ENCODE measurements at regions of chr15 and their contacts with region 1.

Region 1: GRCh38 chr15:98700519-98700918 is 52.2 kb downstream of the IGF1R start:
- DNase-seq: no peak
- ATAC-seq: no peak
- H3K4me3 ChIP-seq: no peak overlapping the region
- H3K27ac ChIP-seq: no peak overlapping the region
- H3K4me1 ChIP-seq: peaks cover 16% of the 10 kb centered on the region
- H3K27me3 ChIP-seq: no peaks in the 10 kb centered on the region
- CTCF ChIP-seq: no peak

Region 2: DNA sequence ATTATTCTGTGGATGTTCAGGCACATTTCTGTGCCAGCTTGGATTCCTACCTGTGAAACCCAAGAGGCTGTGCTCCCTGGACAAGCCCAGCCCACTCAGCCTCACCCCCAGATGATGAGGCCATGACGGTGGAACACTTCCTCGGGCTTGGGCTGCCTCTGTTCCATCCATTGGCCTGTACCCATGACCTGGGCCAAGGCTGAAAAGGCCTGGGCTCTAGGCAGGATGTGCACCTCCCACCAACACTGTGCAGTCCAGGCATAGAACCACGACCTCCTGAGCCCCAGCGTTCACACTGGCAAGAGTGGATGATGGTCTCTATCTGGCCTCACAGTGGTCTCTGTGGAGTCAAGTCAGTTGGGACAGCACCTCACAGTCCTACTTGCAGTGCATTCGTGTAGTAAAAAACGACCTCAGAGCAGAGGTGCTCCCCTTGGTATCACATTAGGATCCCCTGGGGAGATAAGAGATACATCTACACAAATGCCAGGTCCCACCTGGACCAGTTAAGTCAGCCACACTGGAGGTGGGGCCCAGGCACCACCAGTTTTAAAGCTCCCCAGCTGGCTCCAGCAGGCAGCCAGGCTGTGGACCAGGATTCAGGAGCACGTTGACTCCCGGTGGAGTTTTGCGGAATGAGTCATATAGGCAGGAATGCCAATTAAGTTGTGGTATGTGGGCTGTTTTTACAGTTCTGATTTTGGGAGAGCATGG is 91.2 kb before region 1 on chr15:
- CTCF ChIA-PET with region 1: no interaction called
- POLR2A ChIA-PET with region 1: no interaction called
- in situ Hi-C with region 1: no loop called
- intact Hi-C with region 1: no loop called
- DNase-seq: no peak
- ATAC-seq: peak; percentile 94
- H3K4me3 ChIP-seq: no peak overlapping the region
- H3K27ac ChIP-seq: peak overlapping the region; percentile 83
- H3K4me1 ChIP-seq: peaks cover 31% of the 10 kb centered on the region
- H3K27me3 ChIP-seq: no peaks in the 10 kb centered on the region
- CTCF ChIP-seq: no peak

Region 3: GRCh38 chr15:98689431-98689861 is 11.1 kb before region 1 on chr15:
- CTCF ChIA-PET with region 1: interaction called, 6 read pairs
- POLR2A ChIA-PET with region 1: interaction called, 15 read pairs
- in situ Hi-C with region 1: no loop called
- intact Hi-C with region 1: no loop called
- DNase-seq: no peak
- ATAC-seq: no peak
- H3K4me3 ChIP-seq: no peak overlapping the region
- H3K27ac ChIP-seq: no peak overlapping the region
- H3K4me1 ChIP-seq: peaks cover 39% of the 10 kb centered on the region
- H3K27me3 ChIP-seq: no peaks in the 10 kb centered on the region
- CTCF ChIP-seq: no peak

Region 4: DNA sequence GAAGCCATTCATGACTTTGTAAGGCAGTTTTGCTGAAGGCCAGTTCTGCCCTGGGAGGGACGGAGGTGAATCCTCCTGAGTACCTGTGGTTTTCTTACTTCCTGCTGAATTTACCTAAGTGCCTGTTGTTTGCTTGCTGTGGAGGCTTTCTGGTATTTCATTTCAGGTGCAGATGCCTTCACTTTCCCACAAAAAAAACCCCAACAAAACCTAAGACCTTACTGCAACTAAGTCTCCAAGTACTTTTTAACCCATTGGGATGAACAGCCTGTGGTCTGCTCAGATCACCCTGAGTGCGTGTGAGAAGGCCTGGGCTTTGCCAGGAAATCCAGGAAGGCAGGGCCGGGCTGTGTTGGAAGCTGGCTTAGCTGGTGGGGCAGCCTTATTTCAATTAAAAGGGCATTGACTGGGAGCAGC is 13.1 kb after region 1 on chr15:
- CTCF ChIA-PET with region 1: no interaction called
- POLR2A ChIA-PET with region 1: no interaction called
- in situ Hi-C with region 1: no loop called
- intact Hi-C with region 1: no loop called
- DNase-seq: no peak
- ATAC-seq: no peak
- H3K4me3 ChIP-seq: no peak overlapping the region
- H3K27ac ChIP-seq: no peak overlapping the region
- H3K4me1 ChIP-seq: peaks cover 39% of the 10 kb centered on the region
- H3K27me3 ChIP-seq: no peaks in the 10 kb centered on the region
- CTCF ChIP-seq: no peak

Region 5: DNA sequence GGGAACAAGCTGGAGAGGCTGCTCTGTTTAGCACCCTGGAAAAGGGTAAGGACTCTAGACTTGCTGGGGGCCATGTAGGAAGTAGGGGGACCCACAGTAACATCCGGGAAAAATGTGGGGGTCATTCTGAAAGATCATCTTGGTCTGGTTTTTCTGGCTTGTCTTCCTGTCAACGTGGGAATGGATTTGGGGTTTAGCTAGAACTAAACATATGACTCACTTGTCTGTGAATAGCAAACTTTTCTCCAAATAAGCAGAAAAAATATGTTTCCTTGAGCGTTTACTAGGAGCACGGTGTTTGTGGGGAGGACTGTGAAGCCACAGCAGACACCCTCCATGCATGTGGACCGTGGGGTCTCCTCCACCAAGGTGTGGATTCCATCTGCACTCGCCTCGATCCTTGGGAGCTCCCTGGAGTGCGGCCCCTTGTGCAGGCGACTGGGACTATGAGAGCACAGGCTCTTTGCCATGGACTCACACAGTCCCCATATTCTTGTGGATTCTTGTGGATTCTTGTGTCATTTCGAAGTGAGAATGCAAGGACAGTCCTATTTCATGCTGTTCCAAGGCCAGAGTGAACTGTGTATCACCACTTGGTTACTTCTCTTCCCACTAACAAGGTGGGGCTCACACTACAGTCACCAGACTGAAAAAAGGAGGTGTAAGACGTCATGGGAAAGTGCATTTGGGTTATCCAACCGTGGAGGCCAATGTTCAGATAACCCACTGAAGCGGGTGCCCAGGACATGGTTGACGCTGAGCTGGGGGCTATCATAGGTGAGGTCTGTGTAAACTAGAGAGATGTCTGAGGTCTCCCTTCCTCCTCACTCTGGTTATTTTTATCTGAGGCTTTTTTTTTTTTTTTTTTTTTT is 281.6 kb after region 1 on chr15:
- CTCF ChIA-PET with region 1: interaction called, 12 read pairs
- POLR2A ChIA-PET with region 1: no interaction called
- in situ Hi-C with region 1: no loop called
- intact Hi-C with region 1: no loop called
- DNase-seq: no peak
- ATAC-seq: peak; percentile 32
- H3K4me3 ChIP-seq: no peak overlapping the region
- H3K27ac ChIP-seq: no peak overlapping the region
- H3K4me1 ChIP-seq: 0 out of 2 replicates have a peak, but pooled peaks cover 7% of the 10 kb centered on the region
- H3K27me3 ChIP-seq: no peaks in the 10 kb centered on the region
- CTCF ChIP-seq: no peak

Measured in Panc1 (cell line).